ENCODE measurements at regions of chr1 and their contacts with region 1.

Region 1: DNA sequence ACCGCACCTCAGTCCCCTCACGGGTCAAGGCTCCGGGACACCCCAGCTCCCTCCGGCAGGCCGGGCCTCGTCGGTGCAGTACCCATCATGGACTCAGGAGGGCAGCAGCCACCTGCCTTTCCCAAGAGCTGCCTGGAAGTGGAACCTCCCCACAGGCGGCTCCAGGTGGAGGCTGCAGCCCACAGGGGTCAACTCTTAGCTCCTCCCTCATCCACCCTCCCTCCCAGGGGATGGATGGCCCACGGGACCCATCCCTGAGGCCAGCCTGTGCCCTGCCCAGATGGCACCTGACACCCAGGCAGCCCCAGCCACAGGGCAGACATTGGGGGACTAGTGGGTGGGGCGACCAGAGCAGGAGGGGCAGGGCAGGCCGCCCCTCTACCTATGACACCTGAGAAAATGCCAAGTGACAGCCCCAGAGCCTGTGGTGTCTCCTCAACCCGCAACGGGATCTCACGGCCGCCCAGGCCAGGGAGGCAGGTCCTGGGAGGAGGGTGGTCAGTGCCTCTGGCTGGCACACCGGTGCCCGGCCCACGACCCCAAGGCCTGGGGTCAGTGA is 1.2 kb upstream of the ARHGEF16 start:
- DNase-seq: peak; percentile 93
- H3K4me3 ChIP-seq: no peak overlapping the region; a peak in 1 of 4 replicates
- H3K27ac ChIP-seq: no peak overlapping the region
- H3K4me1 ChIP-seq: peaks cover 0 to 14% of the 10 kb centered on the region in 2 experiments; a peak in 1 of 4 replicates
- H3K27me3 ChIP-seq: no peaks in the 10 kb centered on the region
- CTCF ChIP-seq: peak; percentile 75
- EP300 ChIP-seq: no peak
- RAD21 ChIP-seq: peak; percentile 92

Region 2: DNA sequence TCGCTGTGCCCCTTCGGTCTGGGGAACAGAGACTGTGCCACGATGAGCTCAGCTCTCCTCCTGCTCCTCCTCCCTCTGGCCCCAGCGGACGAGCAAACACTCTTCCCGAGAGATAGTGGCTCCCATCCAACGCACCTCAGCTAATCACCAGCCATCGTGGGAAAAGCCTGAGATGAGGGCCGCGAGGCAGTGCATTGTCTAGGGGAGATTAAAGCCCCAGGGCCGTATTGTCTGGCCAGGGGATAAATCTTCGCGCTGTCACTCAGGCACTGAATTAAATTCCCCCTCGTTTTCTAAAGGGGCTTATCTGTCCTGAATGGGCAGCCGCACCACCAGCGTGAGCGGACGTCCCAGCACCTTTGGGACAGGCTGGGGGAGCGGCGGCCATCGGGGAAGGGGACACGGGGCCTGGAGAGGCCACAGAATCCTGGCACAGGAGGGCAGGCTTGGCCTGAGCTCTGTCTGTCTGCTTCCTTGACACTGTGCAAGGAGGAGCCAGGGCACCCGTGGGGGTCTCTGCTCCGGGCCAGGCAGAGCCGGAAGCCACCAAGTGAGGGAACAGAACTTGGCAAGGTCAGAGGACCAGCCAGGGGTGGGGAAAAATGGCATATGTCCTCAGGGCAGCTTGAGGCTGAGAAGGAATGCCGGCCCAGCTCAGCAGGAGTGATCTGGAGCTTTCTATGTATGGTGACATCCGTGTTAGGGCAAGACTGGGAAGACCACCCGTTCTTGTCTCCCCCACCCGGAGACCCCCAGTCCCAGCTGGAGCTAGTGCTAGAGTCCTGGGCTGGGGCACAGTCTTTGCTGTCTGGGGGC is 351.9 kb before region 1 on chr1:
- CTCF ChIA-PET with region 1: no interaction called
- POLR2A ChIA-PET with region 1: no interaction called
- DNase-seq: no peak
- H3K4me3 ChIP-seq: no peak overlapping the region
- H3K27ac ChIP-seq: no peak overlapping the region
- H3K4me1 ChIP-seq: no peaks in the 10 kb centered on the region
- H3K27me3 ChIP-seq: peaks cover 7% of the 10 kb centered on the region; the same call in 1 of the 2 replicates
- CTCF ChIP-seq: no peak
- EP300 ChIP-seq: no peak
- RAD21 ChIP-seq: no peak

Region 3: GRCh38 chr1:3441410-3441847 is 11.9 kb before region 1 on chr1:
- CTCF ChIA-PET with region 1: interaction called, 64 read pairs
- POLR2A ChIA-PET with region 1: no interaction called
- DNase-seq: no peak
- H3K4me3 ChIP-seq: no peak overlapping the region
- H3K27ac ChIP-seq: no peak overlapping the region
- H3K4me1 ChIP-seq: no peaks in the 10 kb centered on the region
- H3K27me3 ChIP-seq: no peaks in the 10 kb centered on the region
- CTCF ChIP-seq: no peak
- EP300 ChIP-seq: no peak
- RAD21 ChIP-seq: no peak

Region 4: GRCh38 chr1:3483801-3484444 is 30.6 kb after region 1 on chr1:
- CTCF ChIA-PET with region 1: interaction called, 72 read pairs
- POLR2A ChIA-PET with region 1: no interaction called
- DNase-seq: peak; percentile 83
- H3K4me3 ChIP-seq: no peak overlapping the region
- H3K27ac ChIP-seq: no peak overlapping the region
- H3K4me1 ChIP-seq: peaks cover 0 to 5% of the 10 kb centered on the region in 2 experiments; a peak in 1 of 4 replicates
- H3K27me3 ChIP-seq: no peaks in the 10 kb centered on the region
- CTCF ChIP-seq: peak; percentile 60
- EP300 ChIP-seq: no peak
- RAD21 ChIP-seq: peak; percentile 47

Region 5: GRCh38 chr1:3518256-3518655 is 65.0 kb after region 1 on chr1:
- CTCF ChIA-PET with region 1: interaction called, 10 read pairs
- POLR2A ChIA-PET with region 1: no interaction called
- DNase-seq: no peak
- H3K4me3 ChIP-seq: no peak overlapping the region; a peak in 1 of 4 replicates
- H3K27ac ChIP-seq: peak overlapping the region in 1 of 2 experiments; percentile 93; a peak in 2 of 4 replicates
- H3K4me1 ChIP-seq: peaks cover 0 to 56% of the 10 kb centered on the region in 2 experiments; a peak in 1 of 4 replicates
- H3K27me3 ChIP-seq: no peaks in the 10 kb centered on the region
- CTCF ChIP-seq: peak; percentile 59
- EP300 ChIP-seq: no peak
- RAD21 ChIP-seq: no peak

Region 6: DNA sequence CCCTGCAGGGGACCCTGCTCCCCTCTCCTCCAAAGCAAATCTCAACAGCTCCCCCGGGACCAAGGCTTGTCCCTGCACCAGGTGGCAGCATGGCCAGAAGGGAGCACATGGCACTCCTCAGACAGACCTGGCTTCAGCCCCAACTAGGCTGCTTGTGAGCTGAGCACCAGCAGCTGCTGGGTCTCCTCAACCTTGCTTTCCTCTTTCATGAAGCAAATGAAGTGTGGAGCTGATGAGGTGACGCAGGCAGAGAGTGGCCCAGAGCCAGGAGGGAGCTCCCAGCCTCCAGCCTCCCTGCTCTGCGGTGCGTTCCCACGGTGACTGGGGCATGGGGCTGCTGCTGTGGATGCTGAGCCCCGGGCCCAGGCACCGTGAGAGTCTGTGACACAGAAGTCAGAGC is 124.0 kb after region 1 on chr1:
- CTCF ChIA-PET with region 1: interaction called, 11 read pairs
- POLR2A ChIA-PET with region 1: no interaction called
- DNase-seq: peak; percentile 68
- H3K4me3 ChIP-seq: no peak overlapping the region
- H3K27ac ChIP-seq: peak overlapping the region in 1 of 2 experiments; percentile 82; a peak in 2 of 4 replicates
- H3K4me1 ChIP-seq: peaks cover 0 to 68% of the 10 kb centered on the region in 2 experiments; a peak in 1 of 4 replicates
- H3K27me3 ChIP-seq: no peaks in the 10 kb centered on the region
- CTCF ChIP-seq: no peak
- EP300 ChIP-seq: no peak
- RAD21 ChIP-seq: 0 out of 2 replicates have a peak, but pooled peaks have one; percentile 10

Region 7: DNA sequence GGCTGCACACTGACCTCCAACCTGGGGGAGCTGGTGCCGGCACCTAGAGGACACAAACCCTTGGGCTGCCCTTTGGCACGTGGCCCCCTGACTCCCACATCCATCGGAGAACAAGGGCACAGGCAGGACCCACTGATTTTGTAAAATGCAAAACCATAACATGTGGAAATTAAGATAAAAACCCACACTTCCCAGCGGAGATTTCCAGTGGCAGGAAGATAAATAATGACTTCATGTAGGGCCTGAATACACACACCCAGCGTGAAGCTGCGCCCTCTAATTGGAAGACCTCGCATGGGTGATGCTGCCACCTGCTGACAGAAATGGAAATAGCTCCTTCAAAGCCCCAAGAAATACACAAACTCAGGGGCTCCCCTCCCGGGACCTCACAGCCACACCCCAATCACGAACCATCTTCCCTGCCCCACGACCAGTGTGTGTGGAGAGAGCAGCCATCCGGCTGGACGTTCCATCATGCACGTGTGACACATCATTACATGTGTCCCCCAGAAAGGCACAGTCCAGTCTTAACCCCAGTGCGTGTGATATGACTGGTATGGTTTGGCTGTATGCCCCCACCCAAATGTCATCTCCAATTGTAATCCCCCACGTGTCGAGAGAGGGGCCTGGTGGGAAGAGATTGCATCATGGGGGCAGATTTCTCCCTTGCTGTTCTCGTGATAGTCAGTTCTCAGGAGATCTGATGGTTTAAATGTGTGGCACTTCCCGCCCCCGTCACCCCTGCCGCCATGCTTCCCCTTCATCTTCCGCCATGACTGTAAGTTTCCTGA is 165.8 kb after region 1 on chr1:
- CTCF ChIA-PET with region 1: interaction called, 26 read pairs
- POLR2A ChIA-PET with region 1: interaction called, 4 read pairs
- DNase-seq: peak; percentile 84
- H3K4me3 ChIP-seq: peak overlapping the region in 1 of 2 experiments; percentile 45; a peak in 1 of 4 replicates
- H3K27ac ChIP-seq: no peak overlapping the region
- H3K4me1 ChIP-seq: peaks cover 0 to 19% of the 10 kb centered on the region in 2 experiments; a peak in 1 of 4 replicates
- H3K27me3 ChIP-seq: no peaks in the 10 kb centered on the region
- CTCF ChIP-seq: peak; percentile 78
- EP300 ChIP-seq: no peak
- RAD21 ChIP-seq: peak; percentile 84

Measured in SK-N-SH (cell line).